ENCODE measurements at regions of chr5 and their contacts with region 1.

Region 1: GRCh38 chr5:103475629-103476240 is 86.9 kb downstream of the NUDT12 start:
- DNase-seq: no peak
- H3K4me3 ChIP-seq: no peak overlapping the region
- H3K27ac ChIP-seq: no peak overlapping the region
- H3K4me1 ChIP-seq: no peaks in the 10 kb centered on the region
- H3K27me3 ChIP-seq: no peaks in the 10 kb centered on the region
- CTCF ChIP-seq: peak in 2 of 3 experiments; percentile 45 to 59
- POLR2A ChIP-seq: no peak

Region 2: GRCh38 chr5:103232393-103232999 is 243.2 kb before region 1 on chr5:
- intact Hi-C with region 1: loop called (anchors 10 kb)
- DNase-seq: no peak
- H3K4me3 ChIP-seq: no peak overlapping the region
- H3K27ac ChIP-seq: no peak overlapping the region
- H3K4me1 ChIP-seq: no peaks in the 10 kb centered on the region
- H3K27me3 ChIP-seq: no peaks in the 10 kb centered on the region
- CTCF ChIP-seq: peak; percentile 20 to 63 (median 46)
- POLR2A ChIP-seq: no peak